Calu3 (cell line): ENCODE measurements at regions of chr4 and their contacts with region 1.

Region 1: DNA sequence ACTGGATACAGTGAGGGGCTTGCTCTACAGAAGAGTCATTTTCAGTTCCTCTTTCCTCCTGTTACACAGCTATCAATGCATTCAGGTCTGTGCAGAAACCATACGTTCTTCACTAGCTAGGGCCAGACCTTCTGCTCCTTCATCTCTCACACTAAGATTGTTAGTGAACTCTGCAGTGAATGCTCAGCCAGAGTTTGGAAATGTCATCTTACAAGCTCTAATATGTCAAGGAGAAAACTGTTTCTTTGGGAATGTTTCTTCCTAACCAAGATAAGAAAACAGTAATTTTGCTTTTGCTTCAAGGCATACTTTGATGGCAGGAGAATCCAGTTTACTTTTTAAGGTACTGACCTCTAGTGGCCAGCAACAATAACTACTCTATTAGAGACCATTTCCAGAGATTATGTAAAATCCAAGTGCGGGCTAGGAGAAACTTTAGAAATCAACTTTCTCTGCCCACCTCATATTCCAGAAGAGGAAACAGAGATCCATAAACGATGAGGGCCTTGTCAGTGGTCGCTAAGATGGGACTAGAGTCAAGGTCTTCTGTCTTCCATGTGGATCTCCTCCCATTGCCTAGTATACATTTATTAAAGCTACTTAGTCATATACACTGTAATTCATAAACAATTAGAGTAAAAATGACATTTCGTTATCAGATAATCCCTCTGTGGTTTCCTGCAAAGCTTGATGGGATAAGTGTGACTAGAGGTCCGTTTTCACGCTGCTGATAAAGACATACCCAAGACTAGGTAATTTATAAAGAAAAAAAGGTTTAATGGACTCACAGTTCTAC is 12.1 kb upstream of the CC2D2A start:
- DNase-seq: no peak
- H3K4me3 Mint-ChIP-seq: no peak overlapping the region
- H3K27ac Mint-ChIP-seq: no peak overlapping the region
- H3K4me1 Mint-ChIP-seq: no peaks in the 10 kb centered on the region
- H3K27me3 Mint-ChIP-seq: peaks cover 54% of the 10 kb centered on the region
- CTCF ChIP-seq: no peak

Region 2: DNA sequence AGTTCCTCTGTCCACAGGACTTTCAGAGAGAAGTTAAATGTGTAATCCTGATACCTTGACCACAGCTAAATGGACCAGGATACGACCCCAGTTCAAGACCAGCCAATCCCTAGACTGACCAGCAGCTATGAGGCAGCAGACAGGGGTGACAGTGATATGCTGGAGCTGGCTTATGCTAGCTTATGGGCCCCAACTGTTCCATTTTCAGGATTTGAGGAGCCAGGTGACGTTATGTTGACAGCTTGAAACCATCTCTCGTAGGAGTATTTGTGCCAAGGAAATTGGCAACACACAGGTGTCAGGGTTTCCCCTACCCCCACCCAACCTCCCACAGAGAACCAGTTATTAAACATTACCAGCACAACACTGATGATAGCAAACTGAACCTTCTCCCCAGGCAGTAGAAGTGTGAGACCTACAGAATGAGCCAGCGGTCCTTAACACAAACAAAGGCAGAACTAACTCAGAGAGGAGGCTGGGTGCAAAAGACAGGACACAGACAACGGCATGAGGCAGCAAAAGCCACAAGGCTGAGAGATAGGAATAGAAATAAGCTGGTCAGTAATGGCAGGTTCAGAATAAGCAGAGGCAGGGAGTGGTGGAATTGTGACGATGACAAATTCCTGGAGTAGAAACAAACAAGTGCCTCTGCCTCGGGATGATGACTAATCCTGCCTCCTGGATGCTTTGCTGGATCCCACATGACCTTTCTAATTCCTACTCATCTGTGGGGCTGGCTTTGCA is 540.9 kb before region 1 on chr4:
- CTCF ChIA-PET with region 1: no interaction called
- intact Hi-C with region 1: no loop called
- DNase-seq: peak; percentile 22
- H3K4me3 Mint-ChIP-seq: peak overlapping the region; percentile 49
- H3K27ac Mint-ChIP-seq: peak overlapping the region; percentile 51
- H3K4me1 Mint-ChIP-seq: peaks cover 23% of the 10 kb centered on the region
- H3K27me3 Mint-ChIP-seq: no peaks in the 10 kb centered on the region
- CTCF ChIP-seq: no peak

Region 3: DNA sequence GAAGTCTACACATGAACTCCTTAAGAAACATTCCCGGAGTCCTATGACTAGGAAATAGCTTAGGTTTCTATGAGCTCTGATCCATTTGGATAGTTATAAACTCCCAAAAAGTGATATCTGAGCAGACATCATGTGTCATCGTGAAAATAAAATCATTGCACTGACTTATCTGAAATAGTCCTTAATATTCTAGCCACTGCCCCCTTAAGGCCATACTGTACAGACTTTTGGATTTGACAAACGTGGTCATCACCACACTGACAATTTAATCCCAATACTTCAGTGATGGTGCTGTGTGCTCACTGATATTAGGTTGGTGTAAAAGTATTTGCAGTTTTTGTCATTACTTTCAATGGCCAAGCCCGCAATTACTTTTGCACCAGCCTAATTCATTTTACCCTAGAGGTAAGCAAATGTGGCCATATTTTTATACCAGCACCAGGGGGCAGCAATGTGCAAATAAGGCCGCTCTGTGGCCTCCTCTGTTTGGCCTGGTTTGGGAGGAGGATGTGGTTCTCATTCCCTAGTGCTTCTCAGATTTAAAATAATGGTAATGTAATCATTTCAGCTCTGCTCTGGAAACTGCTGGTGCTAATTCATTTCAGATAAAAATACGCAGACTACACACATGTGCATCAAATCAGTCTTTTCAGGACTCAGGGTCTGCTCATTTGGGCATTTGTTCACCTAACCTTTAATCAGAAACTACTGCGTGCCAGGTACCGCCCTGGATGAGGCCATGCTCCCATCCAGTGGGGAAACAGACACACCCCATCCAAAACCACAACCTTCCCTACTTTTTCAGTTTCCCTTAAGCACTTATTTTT is 226.1 kb before region 1 on chr4:
- CTCF ChIA-PET with region 1: no interaction called
- intact Hi-C with region 1: loop called (anchors 2 kb)
- DNase-seq: peak; percentile 68
- H3K4me3 Mint-ChIP-seq: no peak overlapping the region
- H3K27ac Mint-ChIP-seq: no peak overlapping the region
- H3K4me1 Mint-ChIP-seq: no peaks in the 10 kb centered on the region
- H3K27me3 Mint-ChIP-seq: peaks cover 2% of the 10 kb centered on the region
- CTCF ChIP-seq: peak; percentile 35

Region 4: GRCh38 chr4:15238720-15239119 is 218.9 kb before region 1 on chr4:
- CTCF ChIA-PET with region 1: interaction called, 5 read pairs
- intact Hi-C with region 1: loop called (anchors 1 kb)
- DNase-seq: peak; percentile 29
- H3K4me3 Mint-ChIP-seq: no peak overlapping the region
- H3K27ac Mint-ChIP-seq: no peak overlapping the region
- H3K4me1 Mint-ChIP-seq: no peaks in the 10 kb centered on the region
- H3K27me3 Mint-ChIP-seq: peaks cover 13% of the 10 kb centered on the region
- CTCF ChIP-seq: no peak

Region 5: GRCh38 chr4:15336410-15337172 is 121.0 kb before region 1 on chr4:
- CTCF ChIA-PET with region 1: no interaction called
- intact Hi-C with region 1: loop called (anchors 10 kb)
- DNase-seq: peak; percentile 0
- H3K4me3 Mint-ChIP-seq: no peak overlapping the region
- H3K27ac Mint-ChIP-seq: peak overlapping the region; percentile 19
- H3K4me1 Mint-ChIP-seq: peaks cover 8% of the 10 kb centered on the region
- H3K27me3 Mint-ChIP-seq: peaks cover 10% of the 10 kb centered on the region
- CTCF ChIP-seq: no peak